ENCODE measurements at regions of chr14 and their contacts with region 1.

Region 1: GRCh38 chr14:95713596-95714371 is at the start of gene TCL1A:
- DNase-seq: no peak
- ATAC-seq: peak; percentile 95
- H3K4me3 ChIP-seq: peak within 1 kb of the TSS; percentile 84
- H3K27ac ChIP-seq: peak within 1 kb of the TSS; percentile 85
- H3K4me1 ChIP-seq: peaks cover 13% of the 10 kb centered on the region
- H3K27me3 ChIP-seq: no peaks in the 10 kb centered on the region
- CTCF ChIP-seq: peak; percentile 50 to 58 (median 58)
- EP300 ChIP-seq: no peak
- POLR2A ChIP-seq: peak; percentile 100
- RAD21 ChIP-seq: peak; percentile 69
- polyA plus RNA-seq, gene TCL1A: 36.5 to 51.6 TPM

Region 2: GRCh38 chr14:95725685-95726336 is 12.0 kb after region 1 on chr14:
- CTCF ChIA-PET with region 1: interaction called, 17 read pairs
- POLR2A ChIA-PET with region 1: interaction called, 9 read pairs
- RAD21 ChIA-PET with region 1: interaction called, 4 read pairs
- SMC1A ChIA-PET with region 1: interaction called, 20 read pairs
- in situ Hi-C with region 1: no loop called
- intact Hi-C with region 1: no loop called
- DNase-seq: peak; percentile 72
- ATAC-seq: peak; percentile 86
- H3K4me3 ChIP-seq: no peak overlapping the region
- H3K27ac ChIP-seq: peak overlapping the region; percentile 57
- H3K4me1 ChIP-seq: peaks cover 45% of the 10 kb centered on the region
- H3K27me3 ChIP-seq: no peaks in the 10 kb centered on the region
- CTCF ChIP-seq: peak in 1 of 3 experiments; percentile 54; a peak in 2 of 6 replicates
- EP300 ChIP-seq: peak in 1 of 2 experiments; percentile 28; a peak in 1 of 4 replicates
- POLR2A ChIP-seq: peak; percentile 24; the same call in 1 of the 2 replicates
- RAD21 ChIP-seq: peak; percentile 45; the same call in 1 of the 2 replicates

Region 3: DNA sequence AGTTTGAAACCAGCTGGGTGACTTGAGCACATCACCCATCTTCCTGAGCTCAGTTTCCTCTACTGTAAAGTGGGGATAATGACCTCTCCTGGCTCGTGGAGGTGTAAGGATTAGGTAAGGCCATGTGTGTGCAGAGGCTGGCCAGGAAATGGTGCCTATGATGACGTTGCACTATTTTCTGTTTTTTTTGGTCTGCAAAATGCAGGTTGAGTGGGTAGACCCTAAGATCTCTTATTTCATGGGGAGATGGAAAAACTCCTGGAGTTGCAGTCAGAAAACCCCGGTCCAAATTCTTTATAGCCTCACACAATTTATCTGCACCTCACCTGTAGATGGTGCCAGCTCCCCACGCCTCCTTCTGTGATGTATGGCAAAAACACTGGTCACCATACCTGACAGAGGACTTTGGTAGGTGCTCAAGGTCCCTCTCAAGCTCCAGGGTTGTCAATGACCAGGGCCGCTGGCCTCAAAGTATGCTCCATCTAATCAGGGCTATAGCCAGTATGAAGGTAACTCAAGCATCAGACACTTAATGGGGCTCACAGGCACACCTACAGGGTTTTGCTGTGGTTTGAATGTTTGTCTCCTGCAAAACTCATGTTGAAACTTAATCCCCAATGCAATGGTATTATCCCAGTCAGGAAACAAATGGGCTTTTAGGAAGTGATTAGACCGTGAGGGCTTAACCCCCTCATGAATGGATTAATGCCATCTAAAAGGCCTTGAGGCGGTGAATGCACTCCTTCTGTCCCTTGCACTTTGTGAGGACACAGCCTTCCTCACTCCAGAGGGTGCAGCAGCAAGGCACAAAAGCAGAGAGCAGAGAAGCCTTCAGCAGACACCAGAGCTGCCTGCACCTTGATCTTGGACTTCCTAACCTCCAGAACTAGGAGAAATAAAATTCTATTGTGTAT is 343.0 kb after region 1 on chr14:
- CTCF ChIA-PET with region 1: no interaction called
- POLR2A ChIA-PET with region 1: no interaction called
- RAD21 ChIA-PET with region 1: no interaction called
- SMC1A ChIA-PET with region 1: no interaction called
- in situ Hi-C with region 1: no loop called
- intact Hi-C with region 1: no loop called
- DNase-seq: no peak
- ATAC-seq: peak; percentile 31; the same call in 1 of the 3 replicates
- H3K4me3 ChIP-seq: no peak overlapping the region
- H3K27ac ChIP-seq: no peak overlapping the region
- H3K4me1 ChIP-seq: no peaks in the 10 kb centered on the region
- H3K27me3 ChIP-seq: peaks cover 0 to 4% of the 10 kb centered on the region in 2 experiments; a peak in 3 of 4 replicates
- CTCF ChIP-seq: peak; percentile 20 to 54 (median 44); a peak in 3 of 6 replicates
- EP300 ChIP-seq: no peak
- POLR2A ChIP-seq: no peak
- RAD21 ChIP-seq: peak; percentile 65

Measured in GM12878 (cell line).